Ovary (tissue), 10 donors: ENCODE measurements at regions of chr10 and their contacts with region 1.

Region 1: GRCh38 chr10:32367793-32368453 is 21.0 kb upstream of the EPC1 start:
- DNase-seq: peak; percentile 67 to 81 (median 69)
- H3K4me3 ChIP-seq: no peak overlapping the region
- H3K27ac ChIP-seq: no peak overlapping the region
- H3K4me1 ChIP-seq: peaks cover 3% of the 10 kb centered on the region
- H3K27me3 ChIP-seq: no peaks in the 10 kb centered on the region
- CTCF ChIP-seq: peak; percentile 48 to 80 (median 80)
- EP300 ChIP-seq: no peak
- POLR2A ChIP-seq: no peak

Region 2: DNA sequence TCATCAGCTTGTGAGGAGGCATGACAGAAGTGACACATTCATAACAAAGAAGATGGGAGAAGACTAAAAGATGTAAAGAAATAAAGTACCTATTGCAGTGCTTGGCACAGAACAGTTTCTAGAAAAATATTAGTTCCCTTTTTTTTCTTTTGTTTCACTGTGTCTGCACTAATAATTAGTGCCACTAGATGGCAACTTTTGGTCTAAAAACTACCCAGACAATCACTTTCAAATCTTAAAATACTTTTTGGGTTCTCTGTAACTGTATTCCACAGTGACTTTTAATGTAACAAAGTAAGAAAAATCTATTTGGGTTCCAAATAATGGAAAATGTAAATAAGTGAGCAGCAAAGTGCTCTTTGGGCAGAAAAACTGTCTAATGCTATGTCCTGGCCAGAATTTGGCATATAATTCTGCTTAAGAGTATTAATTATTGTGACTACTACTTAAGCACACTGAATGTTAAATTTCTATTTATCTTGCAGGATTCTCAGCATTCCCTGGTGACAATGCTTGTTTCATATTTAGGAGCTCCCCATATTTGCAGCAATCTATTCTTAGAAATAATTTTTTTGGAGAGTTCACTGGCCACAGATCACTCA is 176.9 kb before region 1 on chr10:
- intact Hi-C with region 1: loop called in 2 of 4 experiments (anchors 5 to 10 kb)
- DNase-seq: no peak
- H3K4me3 ChIP-seq: no peak overlapping the region
- H3K27ac ChIP-seq: no peak overlapping the region
- H3K4me1 ChIP-seq: no peaks in the 10 kb centered on the region
- H3K27me3 ChIP-seq: no peaks in the 10 kb centered on the region
- CTCF ChIP-seq: peak; percentile 35 to 60 (median 40)
- EP300 ChIP-seq: no peak
- POLR2A ChIP-seq: no peak

Region 3: DNA sequence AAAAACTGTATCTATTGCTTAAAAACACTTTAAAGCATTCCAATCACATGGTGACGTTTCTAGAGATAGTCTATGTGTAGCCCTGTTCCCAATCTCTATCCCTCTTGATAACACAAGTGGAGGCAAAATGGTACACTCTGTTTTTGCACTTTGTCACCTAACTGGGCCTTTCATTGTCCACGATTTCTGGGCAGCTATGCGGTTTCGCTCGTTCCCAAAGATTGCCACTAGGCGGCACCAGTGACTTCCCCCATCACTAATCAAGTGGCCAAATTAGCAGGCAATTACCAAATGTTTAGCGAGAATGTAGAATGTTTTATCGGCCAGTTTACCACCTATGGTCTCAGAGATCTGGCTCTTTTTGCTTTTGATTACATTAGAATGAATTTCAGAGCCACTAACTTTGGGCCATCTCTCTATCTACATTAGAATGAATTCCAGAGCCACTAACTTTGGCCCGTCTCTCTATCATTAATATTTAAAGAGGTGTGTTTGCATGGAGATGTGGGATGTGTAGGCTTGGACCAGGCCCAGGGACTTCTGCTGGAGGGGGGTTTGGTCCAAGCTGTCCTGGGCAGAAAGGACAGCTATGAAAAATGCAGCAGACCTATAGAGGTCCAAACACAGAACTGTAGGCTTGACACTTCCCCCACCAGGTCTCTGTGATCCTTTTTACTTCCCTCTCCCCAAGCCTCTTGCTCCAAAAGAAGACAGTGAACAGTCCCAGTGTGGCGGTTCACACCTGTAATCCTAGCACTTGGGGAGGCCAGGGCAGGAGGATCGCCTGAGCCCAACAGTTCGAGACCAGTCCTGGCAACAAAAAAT is 111.1 kb before region 1 on chr10:
- intact Hi-C with region 1: loop called in 1 of 4 experiments (anchors 5 kb)
- DNase-seq: peak; percentile 43 to 77 (median 72)
- H3K4me3 ChIP-seq: no peak overlapping the region
- H3K27ac ChIP-seq: no peak overlapping the region
- H3K4me1 ChIP-seq: peaks cover 1% of the 10 kb centered on the region
- H3K27me3 ChIP-seq: no peaks in the 10 kb centered on the region
- CTCF ChIP-seq: peak; percentile 58 to 80 (median 78)
- EP300 ChIP-seq: no peak
- POLR2A ChIP-seq: no peak